ENCODE measurements at regions of chr6 and their contacts with region 1.

Region 1: DNA sequence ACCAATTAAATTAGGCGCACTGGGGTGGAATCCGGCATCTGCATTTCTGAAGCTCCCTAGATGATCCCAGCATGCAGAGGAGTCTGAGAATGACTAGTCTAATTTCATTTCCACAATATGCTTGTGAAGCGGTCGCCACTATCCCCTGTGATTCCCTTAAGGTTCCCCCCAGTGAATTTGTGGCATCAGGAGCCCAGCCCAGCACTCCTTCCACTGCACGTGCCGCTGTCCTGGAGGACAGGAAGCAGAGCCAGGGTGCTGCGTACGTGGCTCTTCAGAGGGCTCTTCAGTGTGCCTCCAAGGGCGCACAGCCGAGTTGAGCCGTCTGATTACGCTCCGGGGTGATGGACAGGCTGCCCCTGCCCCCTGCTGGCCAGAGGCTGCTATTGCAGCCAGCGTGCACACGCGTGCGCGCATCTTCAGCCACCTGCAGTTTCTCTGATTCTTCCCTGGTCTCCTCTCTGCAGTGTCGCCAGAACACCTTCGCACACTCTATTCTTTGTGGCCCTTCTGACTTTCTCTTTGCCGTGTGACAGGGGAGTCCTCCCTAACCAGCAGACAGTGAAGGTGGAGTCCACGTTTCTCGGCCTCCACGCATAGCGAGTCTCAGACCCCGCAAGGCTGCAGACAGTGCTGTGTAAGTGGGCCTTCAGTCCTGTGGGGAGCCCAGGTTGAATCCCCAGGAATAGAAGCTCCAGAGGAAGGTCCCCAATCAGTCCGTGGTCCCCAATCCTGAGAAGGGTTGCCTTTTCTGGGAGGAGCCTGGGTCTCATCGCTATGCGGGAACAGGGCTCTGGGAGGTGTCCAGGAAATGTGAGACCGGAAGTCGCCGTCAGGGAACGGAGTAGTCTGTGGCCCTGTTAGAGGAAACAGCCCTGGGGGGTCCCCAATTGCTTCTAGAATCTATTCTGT is 16.5 kb upstream of the NCR2 start:
- DNase-seq: peak; percentile 85
- ATAC-seq: peak; percentile 96
- H3K4me3 Mint-ChIP-seq: peak overlapping the region; percentile 58
- H3K27ac Mint-ChIP-seq: no peak overlapping the region
- H3K4me1 Mint-ChIP-seq: peaks cover 20% of the 10 kb centered on the region
- H3K27me3 Mint-ChIP-seq: peaks cover 15% of the 10 kb centered on the region
- CTCF ChIP-seq: peak; percentile 100

Region 2: DNA sequence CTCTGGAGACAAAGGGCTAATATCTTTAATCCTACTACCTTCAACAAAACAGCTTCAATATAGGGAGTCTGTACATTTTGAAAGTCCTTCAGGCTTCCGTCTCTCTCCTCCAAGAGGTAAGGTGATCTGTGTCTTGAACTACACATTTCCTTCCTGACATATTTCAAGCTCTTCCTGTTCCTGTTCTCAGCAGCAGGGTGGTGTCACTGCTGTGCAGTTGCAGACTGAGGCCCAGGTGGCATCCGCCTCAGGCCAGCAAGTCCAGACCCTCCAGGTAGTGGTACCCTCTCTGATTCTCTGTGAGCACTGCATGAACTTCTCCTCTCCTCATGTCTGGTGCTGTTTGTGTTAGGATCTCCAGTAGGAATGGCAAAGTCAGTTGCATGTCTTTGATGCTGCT is 238.3 kb before region 1 on chr6:
- CTCF ChIA-PET with region 1: no interaction called
- POLR2A ChIA-PET with region 1: no interaction called
- DNase-seq: no peak
- ATAC-seq: no peak
- H3K4me3 Mint-ChIP-seq: no peak overlapping the region
- H3K27ac Mint-ChIP-seq: no peak overlapping the region
- H3K4me1 Mint-ChIP-seq: peaks cover 11% of the 10 kb centered on the region
- H3K27me3 Mint-ChIP-seq: no peaks in the 10 kb centered on the region
- CTCF ChIP-seq: no peak

Region 3: DNA sequence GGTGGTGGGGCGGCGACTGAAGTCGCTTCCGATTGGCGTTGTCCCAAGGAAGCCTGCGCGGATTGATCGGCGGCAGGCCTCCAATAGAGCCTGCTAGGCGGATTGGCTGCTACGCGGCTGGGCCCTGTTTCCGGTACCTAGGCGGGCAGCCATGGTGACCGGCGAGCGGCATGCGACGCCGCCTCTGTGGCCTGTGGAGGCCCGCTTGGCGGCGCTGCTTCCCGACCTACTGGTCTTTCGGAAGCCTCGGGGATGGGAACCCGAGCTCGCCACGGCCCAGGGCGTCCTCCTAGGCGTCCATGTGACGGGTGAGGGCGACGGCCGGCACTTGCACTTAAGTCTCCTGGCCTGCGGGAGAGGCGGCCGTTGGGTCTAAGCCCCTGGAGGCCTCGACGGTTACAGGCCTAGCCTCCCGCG is 218.0 kb before region 1 on chr6:
- CTCF ChIA-PET with region 1: interaction called, 20 read pairs
- POLR2A ChIA-PET with region 1: no interaction called
- DNase-seq: peak; percentile 94
- ATAC-seq: peak; percentile 98
- H3K4me3 Mint-ChIP-seq: peak overlapping the region; percentile 48
- H3K27ac Mint-ChIP-seq: peak overlapping the region; percentile 80; the same call in 1 of the 2 replicates
- H3K4me1 Mint-ChIP-seq: peaks cover 18% of the 10 kb centered on the region
- H3K27me3 Mint-ChIP-seq: peaks cover 6% of the 10 kb centered on the region; the same call in 1 of the 2 replicates
- CTCF ChIP-seq: no peak

Region 4: GRCh38 chr6:41228616-41229015 is 90.3 kb before region 1 on chr6:
- CTCF ChIA-PET with region 1: interaction called, 14 read pairs
- POLR2A ChIA-PET with region 1: no interaction called
- DNase-seq: peak; percentile 46
- ATAC-seq: peak; percentile 94
- H3K4me3 Mint-ChIP-seq: no peak overlapping the region
- H3K27ac Mint-ChIP-seq: no peak overlapping the region
- H3K4me1 Mint-ChIP-seq: peaks cover 4% of the 10 kb centered on the region; the same call in 1 of the 2 replicates
- H3K27me3 Mint-ChIP-seq: peaks cover 15% of the 10 kb centered on the region
- CTCF ChIP-seq: peak; percentile 20; the same call in 1 of the 2 replicates

Region 5: GRCh38 chr6:41278699-41279405 is 40.1 kb before region 1 on chr6:
- CTCF ChIA-PET with region 1: interaction called, 25 read pairs
- POLR2A ChIA-PET with region 1: no interaction called
- DNase-seq: peak; percentile 80
- ATAC-seq: peak; percentile 99
- H3K4me3 Mint-ChIP-seq: 0 out of 2 replicates have a peak overlapping the region, but pooled peaks have one; percentile 9
- H3K27ac Mint-ChIP-seq: no peak overlapping the region
- H3K4me1 Mint-ChIP-seq: peaks cover 10% of the 10 kb centered on the region
- H3K27me3 Mint-ChIP-seq: peaks cover 10% of the 10 kb centered on the region
- CTCF ChIP-seq: peak; percentile 47; the same call in 1 of the 2 replicates

Region 6: DNA sequence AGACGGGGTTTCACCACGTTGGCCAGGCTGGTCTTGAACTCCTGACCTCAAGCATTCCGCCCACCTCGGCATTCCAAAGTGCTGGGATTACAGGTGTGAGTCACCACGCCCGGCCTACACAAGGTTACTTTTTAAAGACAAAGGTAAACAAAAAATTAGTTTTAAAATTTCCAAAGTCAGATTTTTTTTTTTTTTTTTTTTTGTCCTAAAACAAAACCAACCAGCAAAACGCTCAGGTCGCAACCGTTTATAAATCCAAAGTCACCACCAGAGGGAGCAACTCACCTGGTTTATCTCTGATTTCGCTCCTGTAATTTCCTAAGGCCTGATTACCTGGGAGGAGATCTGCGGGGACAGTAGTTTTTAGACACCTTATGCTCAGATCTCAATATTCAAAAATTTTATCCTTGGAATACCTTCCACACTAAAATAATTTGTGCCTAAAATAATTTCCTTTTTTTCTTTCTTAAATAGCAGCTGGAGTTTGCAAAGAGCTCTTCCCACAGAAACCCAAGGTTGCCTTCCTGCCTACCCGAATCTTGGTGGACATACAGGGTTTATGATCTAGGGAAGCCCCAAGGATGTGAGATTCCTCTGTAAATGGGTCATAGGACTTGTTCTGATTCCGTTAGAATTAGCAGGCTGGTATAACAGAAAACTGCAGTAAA is 12.6 kb before region 1 on chr6:
- CTCF ChIA-PET with region 1: interaction called, 12 read pairs
- POLR2A ChIA-PET with region 1: no interaction called
- DNase-seq: peak; percentile 53
- ATAC-seq: peak; percentile 71
- H3K4me3 Mint-ChIP-seq: no peak overlapping the region
- H3K27ac Mint-ChIP-seq: no peak overlapping the region
- H3K4me1 Mint-ChIP-seq: peaks cover 15% of the 10 kb centered on the region
- H3K27me3 Mint-ChIP-seq: peaks cover 6% of the 10 kb centered on the region; the same call in 1 of the 2 replicates
- CTCF ChIP-seq: peak; percentile 69

Region 7: DNA sequence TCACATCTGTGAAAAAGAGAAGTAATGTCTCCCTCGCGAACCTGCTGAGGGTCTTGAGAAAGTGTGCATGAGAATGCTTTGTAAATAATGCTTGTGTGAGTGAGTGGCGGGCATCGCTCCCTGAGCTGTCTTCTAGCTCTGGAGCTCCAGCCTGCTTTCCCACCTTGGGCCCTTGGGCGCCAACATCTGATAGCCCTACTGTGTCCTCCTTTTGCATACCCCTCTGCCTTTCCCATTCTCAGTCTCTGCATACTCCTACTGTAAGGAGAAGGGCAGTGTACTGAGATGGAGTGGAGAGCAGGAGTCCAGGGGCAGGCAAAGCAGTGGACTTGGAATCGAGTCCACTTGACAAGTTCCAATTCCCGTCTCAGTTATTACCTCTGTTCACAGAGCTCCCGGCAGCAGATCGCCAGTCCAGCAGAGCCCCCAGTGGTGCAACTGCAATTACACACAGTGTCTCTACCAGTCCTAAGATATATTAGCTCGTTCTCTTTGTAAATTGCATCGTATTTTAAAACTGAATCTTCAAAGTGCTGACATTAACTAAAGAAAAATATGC is 15.7 kb after region 1 on chr6:
- CTCF ChIA-PET with region 1: interaction called, 14 read pairs
- POLR2A ChIA-PET with region 1: no interaction called
- DNase-seq: no peak
- ATAC-seq: peak; percentile 36; the same call in 1 of the 2 replicates
- H3K4me3 Mint-ChIP-seq: no peak overlapping the region
- H3K27ac Mint-ChIP-seq: no peak overlapping the region
- H3K4me1 Mint-ChIP-seq: 0 out of 2 replicates have a peak, but pooled peaks cover 3% of the 10 kb centered on the region
- H3K27me3 Mint-ChIP-seq: peaks cover 7% of the 10 kb centered on the region; the same call in 1 of the 2 replicates
- CTCF ChIP-seq: no peak

Measured in WTC11 (cell line).